ENCODE measurements at regions of chr14 and their contacts with region 1.

Region 1: GRCh38 chr14:75293920-75294642 is 15.5 kb downstream of the FOS start:
- DNase-seq: no peak
- ATAC-seq: peak; percentile 99
- H3K4me3 ChIP-seq: peak overlapping the region; percentile 72
- H3K27ac ChIP-seq: no peak overlapping the region
- H3K4me1 ChIP-seq: peaks cover 17% of the 10 kb centered on the region
- H3K27me3 ChIP-seq: no peaks in the 10 kb centered on the region; a peak in 1 of 4 replicates
- CTCF ChIP-seq: no peak
- EP300 ChIP-seq: peak in 1 of 2 experiments; percentile 72; a peak in 2 of 4 replicates
- POLR2A ChIP-seq: no peak
- RAD21 ChIP-seq: no peak

Region 2: GRCh38 chr14:75126679-75127473 is 167.2 kb before region 1 on chr14 and contains the start of gene NEK9:
- CTCF ChIA-PET with region 1: interaction called, 279 read pairs
- POLR2A ChIA-PET with region 1: interaction called, 3 read pairs
- RAD21 ChIA-PET with region 1: interaction called, 15 read pairs
- SMC1A ChIA-PET with region 1: interaction called, 154 read pairs
- in situ Hi-C with region 1: no loop called
- intact Hi-C with region 1: loop called (anchors 1 kb)
- DNase-seq: peak; percentile 45
- ATAC-seq: peak; percentile 98
- H3K4me3 ChIP-seq: peak within 1 kb of the TSS; percentile 76
- H3K27ac ChIP-seq: peak within 1 kb of the TSS; percentile 88
- H3K4me1 ChIP-seq: peaks cover 11% of the 10 kb centered on the region
- H3K27me3 ChIP-seq: no peaks in the 10 kb centered on the region
- CTCF ChIP-seq: no peak
- EP300 ChIP-seq: no peak
- POLR2A ChIP-seq: peak; percentile 98
- RAD21 ChIP-seq: no peak
- polyA plus RNA-seq, gene NEK9: 6.0 to 15.7 TPM

Region 3: DNA sequence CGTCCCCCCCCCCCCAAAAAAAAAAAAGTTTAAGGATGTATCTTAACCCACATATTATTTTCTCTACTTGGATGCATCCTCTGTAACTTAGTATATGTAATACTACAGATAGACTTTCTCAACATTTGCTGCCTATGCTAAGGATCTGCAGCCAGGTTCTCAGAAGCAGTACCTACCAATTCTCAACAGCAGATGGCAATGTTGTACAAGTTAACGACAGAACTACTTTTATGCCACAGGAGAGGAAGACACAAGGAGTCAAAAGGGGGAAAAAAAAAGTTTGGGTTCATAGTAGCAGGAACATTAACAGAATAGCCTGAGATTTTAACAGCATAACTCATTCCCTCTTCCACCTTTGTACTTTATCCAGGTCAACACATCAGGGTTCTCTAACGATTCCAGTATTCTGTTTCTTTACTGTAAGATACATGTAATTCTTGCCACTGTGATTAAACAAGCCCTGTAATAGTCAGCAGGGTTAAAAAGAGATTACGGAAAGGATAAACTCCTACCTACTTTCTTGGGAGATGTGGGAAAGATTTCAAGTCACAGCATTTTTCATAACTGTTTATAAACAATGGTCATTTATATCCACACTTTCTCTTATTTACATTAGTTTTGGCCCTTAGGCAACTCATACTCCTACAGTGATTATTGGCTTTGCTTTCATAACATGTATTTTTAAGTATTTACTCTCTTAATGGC is 161.5 kb before region 1 on chr14:
- CTCF ChIA-PET with region 1: interaction called, 279 read pairs
- POLR2A ChIA-PET with region 1: interaction called, 10 read pairs
- RAD21 ChIA-PET with region 1: interaction called, 57 read pairs
- SMC1A ChIA-PET with region 1: interaction called, 154 read pairs
- in situ Hi-C with region 1: no loop called
- intact Hi-C with region 1: loop called (anchors 1 kb)
- DNase-seq: peak; percentile 66
- ATAC-seq: peak; percentile 91
- H3K4me3 ChIP-seq: no peak overlapping the region
- H3K27ac ChIP-seq: no peak overlapping the region
- H3K4me1 ChIP-seq: peaks cover 11% of the 10 kb centered on the region
- H3K27me3 ChIP-seq: no peaks in the 10 kb centered on the region
- CTCF ChIP-seq: peak; percentile 67 to 70 (median 68)
- EP300 ChIP-seq: no peak
- POLR2A ChIP-seq: no peak
- RAD21 ChIP-seq: peak; percentile 94

Region 4: GRCh38 chr14:75223664-75224154 is 70.4 kb before region 1 on chr14:
- CTCF ChIA-PET with region 1: interaction called, 5 read pairs
- POLR2A ChIA-PET with region 1: no interaction called
- RAD21 ChIA-PET with region 1: interaction called, 3 read pairs
- SMC1A ChIA-PET with region 1: interaction called, 5 read pairs
- in situ Hi-C with region 1: no loop called
- intact Hi-C with region 1: loop called (anchors 10 kb)
- DNase-seq: peak; percentile 75
- ATAC-seq: peak; percentile 73
- H3K4me3 ChIP-seq: no peak overlapping the region
- H3K27ac ChIP-seq: no peak overlapping the region; the same call in none of the 2 replicates
- H3K4me1 ChIP-seq: peaks cover 38% of the 10 kb centered on the region
- H3K27me3 ChIP-seq: no peaks in the 10 kb centered on the region; a peak in 1 of 4 replicates
- CTCF ChIP-seq: no peak
- EP300 ChIP-seq: peak in 1 of 2 experiments; percentile 72; a peak in 2 of 4 replicates
- POLR2A ChIP-seq: no peak
- RAD21 ChIP-seq: no peak

Region 5: GRCh38 chr14:75342762-75343599 is 48.9 kb after region 1 on chr14:
- CTCF ChIA-PET with region 1: no interaction called
- POLR2A ChIA-PET with region 1: no interaction called
- RAD21 ChIA-PET with region 1: no interaction called
- SMC1A ChIA-PET with region 1: no interaction called
- in situ Hi-C with region 1: no loop called
- intact Hi-C with region 1: no loop called
- DNase-seq: peak; percentile 57
- ATAC-seq: peak; percentile 82
- H3K4me3 ChIP-seq: no peak overlapping the region
- H3K27ac ChIP-seq: peak overlapping the region; percentile 28; the same call in 1 of the 2 replicates
- H3K4me1 ChIP-seq: peaks cover 35% of the 10 kb centered on the region
- H3K27me3 ChIP-seq: no peaks in the 10 kb centered on the region
- CTCF ChIP-seq: no peak
- EP300 ChIP-seq: no peak
- POLR2A ChIP-seq: no peak
- RAD21 ChIP-seq: no peak

Region 6: DNA sequence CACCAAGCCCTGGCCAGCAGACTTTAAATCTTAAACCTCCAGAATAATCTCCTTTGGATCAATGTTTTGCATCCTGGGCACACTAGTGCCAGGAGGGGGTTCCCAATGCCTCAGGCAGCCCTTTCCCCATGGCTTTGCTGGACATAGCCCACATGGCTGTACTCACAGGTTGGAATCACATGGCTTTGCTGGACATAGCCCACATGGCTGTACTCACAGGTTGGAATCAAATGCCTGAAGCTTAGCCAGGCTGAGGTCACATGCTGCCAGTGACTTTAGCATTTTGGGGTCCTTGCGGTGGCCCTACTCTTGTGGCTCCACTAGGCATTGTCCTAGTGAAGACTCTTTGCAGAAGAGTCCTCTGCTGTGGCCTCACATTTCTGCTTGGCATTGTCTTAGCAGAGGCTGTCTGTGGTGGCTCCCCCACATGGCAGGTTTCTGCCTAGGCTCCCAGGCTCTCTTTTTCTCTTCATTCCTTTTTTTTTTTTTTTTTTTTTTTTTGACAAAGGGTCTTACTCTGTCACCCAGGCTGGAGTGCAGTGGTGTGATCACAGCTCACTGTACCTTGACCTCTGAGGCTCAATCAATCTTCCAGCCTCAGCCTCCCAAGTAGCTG is 297.4 kb after region 1 on chr14:
- CTCF ChIA-PET with region 1: no interaction called
- POLR2A ChIA-PET with region 1: no interaction called
- RAD21 ChIA-PET with region 1: no interaction called
- SMC1A ChIA-PET with region 1: no interaction called
- in situ Hi-C with region 1: no loop called
- intact Hi-C with region 1: no loop called
- DNase-seq: no peak
- ATAC-seq: no peak
- H3K4me3 ChIP-seq: no peak overlapping the region
- H3K27ac ChIP-seq: no peak overlapping the region
- H3K4me1 ChIP-seq: no peaks in the 10 kb centered on the region
- H3K27me3 ChIP-seq: no peaks in the 10 kb centered on the region
- CTCF ChIP-seq: no peak
- EP300 ChIP-seq: no peak
- POLR2A ChIP-seq: no peak
- RAD21 ChIP-seq: no peak

Measured in GM12878 (cell line).